Right cardiac atrium (tissue), 5 donors: ENCODE measurements at regions of chr9 and their contacts with region 1.

Region 1: DNA sequence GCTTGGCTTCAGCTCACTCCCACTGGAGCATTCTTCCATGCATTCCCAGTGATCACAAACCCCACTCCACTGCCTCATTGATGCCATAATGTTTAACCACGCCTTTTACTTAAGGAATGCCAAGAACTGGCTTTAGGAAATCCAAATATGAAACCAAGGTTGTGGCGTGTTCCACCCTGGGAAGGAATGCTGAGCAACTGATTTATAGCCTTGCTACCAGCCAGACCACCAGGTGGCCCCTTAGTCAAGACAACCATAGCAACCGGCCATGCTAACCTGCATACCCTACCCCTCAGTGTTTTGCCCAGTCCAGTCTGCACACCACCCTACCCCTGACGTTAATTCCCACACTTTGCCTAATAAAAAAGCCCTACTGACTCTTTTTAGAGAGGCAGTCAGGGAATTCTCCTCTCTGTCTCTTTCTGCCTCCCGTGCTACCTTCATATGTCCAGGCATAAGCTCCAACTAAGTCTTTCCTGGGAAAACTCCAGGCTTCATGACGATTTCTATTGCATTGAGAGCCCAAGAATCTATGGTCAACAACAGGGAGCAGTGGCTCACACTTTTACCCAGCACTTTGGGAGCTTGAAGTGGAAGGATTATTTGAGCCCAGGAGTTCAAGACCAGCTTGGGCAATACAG is 27.0 kb upstream of the PRRC2B start:
- DNase-seq: peak in 2 of 3 donors; percentile 57 to 77
- ATAC-seq: peak; percentile 79 to 83
- H3K4me3 ChIP-seq: no peak overlapping the region
- H3K27ac ChIP-seq: peak overlapping the region; percentile 2
- H3K4me1 ChIP-seq: no peaks in the 10 kb centered on the region
- H3K27me3 ChIP-seq: no peaks in the 10 kb centered on the region

Region 2: GRCh38 chr9:131478421-131478868 is 111.6 kb after region 1 on chr9:
- intact Hi-C with region 1: loop called in 2 of 4 experiments (anchors 5 to 10 kb)
- DNase-seq: peak in 1 of 3 donors; percentile 75
- ATAC-seq: no peak
- H3K4me3 ChIP-seq: no peak overlapping the region
- H3K27ac ChIP-seq: no peak overlapping the region
- H3K4me1 ChIP-seq: peaks cover 4% of the 10 kb centered on the region
- H3K27me3 ChIP-seq: no peaks in the 10 kb centered on the region